ENCODE measurements at regions of chr6 and their contacts with region 1.

Region 1: GRCh38 chr6:142146828-142147662 is at the starts of genes NMBR and VTA1:
- DNase-seq: peak; percentile 99
- total RNA-seq, gene NMBR: not detected
- total RNA-seq, gene VTA1: 25.4 to 28.5 TPM

Region 2: GRCh38 chr6:142068416-142068815 is 78.6 kb before region 1 on chr6:
- intact Hi-C with region 1: no loop called
- DNase-seq: no peak

Region 3: DNA sequence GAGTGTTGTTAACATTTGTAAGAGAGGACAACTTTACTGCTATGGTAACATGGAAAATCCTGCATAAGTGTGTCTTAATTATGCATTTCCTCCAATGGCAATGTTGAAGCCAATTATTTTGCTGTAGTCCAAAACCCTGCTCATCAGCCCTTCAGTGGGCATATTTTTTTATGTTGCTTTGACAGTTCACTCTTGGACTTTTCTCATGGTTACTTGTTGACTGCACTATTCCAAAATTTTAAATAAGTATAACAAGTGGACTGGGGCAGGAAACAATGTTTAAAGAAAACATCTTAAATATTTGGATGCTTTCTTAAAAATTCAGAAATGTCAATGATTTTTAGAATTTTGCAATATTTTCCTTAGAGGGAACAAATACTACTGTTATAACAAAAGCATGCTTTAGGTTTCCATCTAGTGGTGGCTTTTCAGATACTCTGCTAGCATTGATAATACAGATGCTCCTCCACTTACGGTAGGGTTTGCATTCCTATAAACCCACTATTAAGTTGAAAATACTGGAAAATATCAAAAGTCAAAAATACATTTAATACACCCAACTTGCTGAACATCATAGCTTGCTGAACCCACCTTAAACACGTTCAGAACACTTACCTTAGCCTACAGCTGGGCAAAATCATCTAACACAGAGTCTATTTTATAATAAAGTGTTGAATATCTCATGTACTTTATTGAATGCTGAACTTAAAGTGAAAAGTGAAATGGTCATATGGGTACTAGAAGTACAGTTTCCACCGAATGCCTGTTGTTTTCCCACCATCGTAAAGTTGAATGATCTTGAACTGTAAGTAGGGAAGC is 241.2 kb after region 1 on chr6:
- intact Hi-C with region 1: loop called in 1 of 2 experiments (anchors 10 kb)
- DNase-seq: no peak

Measured in posterior vena cava (tissue), 2 donors.